ENCODE measurements at regions of chr13 and their contacts with region 1.

Region 1: GRCh38 chr13:75870397-75870903 is 234.3 kb downstream of the LMO7 start:
- DNase-seq: no peak
- H3K4me3 ChIP-seq: peak overlapping the region in 57 of 59 donors; percentile 2 to 65 (median 47)
- H3K27ac ChIP-seq: peak overlapping the region in 1 of 59 donors; percentile 39
- H3K27me3 ChIP-seq: peaks cover 0 to 9% (median 0%) of the 10 kb centered on the region in 45 donors
- CTCF ChIP-seq: peak; percentile 69 to 93 (median 82)

Region 2: DNA sequence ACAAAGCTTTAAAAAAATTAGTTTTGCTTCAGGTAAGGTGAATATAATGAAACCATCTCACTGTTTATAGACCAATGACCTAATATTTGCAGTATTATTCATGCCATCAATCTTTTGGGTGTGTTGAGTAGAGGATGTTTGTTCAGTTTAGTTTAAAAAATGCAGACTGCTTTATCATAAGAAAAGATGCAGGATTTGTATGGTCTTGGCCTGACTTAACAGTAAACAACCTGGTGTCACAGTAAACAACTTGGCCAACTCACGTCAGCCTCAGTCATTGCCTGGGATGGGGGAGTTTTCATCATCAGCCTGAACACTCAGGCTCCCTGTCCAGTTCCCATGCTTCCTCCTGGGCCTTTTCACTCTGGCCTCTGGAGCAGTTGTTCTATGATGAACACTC is 179.3 kb before region 1 on chr13:
- intact Hi-C with region 1: loop called (anchors 5 kb)
- DNase-seq: no peak
- H3K4me3 ChIP-seq: no peak overlapping the region
- H3K27ac ChIP-seq: no peak overlapping the region
- H3K27me3 ChIP-seq: no peaks in the 10 kb centered on the region
- CTCF ChIP-seq: no peak

Region 3: GRCh38 chr13:76903544-76904162 is 1033.2 kb after region 1 on chr13:
- intact Hi-C with region 1: loop called (anchors 5 kb)
- DNase-seq: peak in 7 of 10 donors; percentile 52 to 77 (median 59)
- H3K4me3 ChIP-seq: no peak overlapping the region
- H3K27ac ChIP-seq: no peak overlapping the region
- H3K27me3 ChIP-seq: peaks cover 0 to 4% (median 0%) of the 10 kb centered on the region in 45 donors
- CTCF ChIP-seq: peak; percentile 90 to 100 (median 97)